ENCODE measurements at regions of chr12 and their contacts with region 1.

Region 1: DNA sequence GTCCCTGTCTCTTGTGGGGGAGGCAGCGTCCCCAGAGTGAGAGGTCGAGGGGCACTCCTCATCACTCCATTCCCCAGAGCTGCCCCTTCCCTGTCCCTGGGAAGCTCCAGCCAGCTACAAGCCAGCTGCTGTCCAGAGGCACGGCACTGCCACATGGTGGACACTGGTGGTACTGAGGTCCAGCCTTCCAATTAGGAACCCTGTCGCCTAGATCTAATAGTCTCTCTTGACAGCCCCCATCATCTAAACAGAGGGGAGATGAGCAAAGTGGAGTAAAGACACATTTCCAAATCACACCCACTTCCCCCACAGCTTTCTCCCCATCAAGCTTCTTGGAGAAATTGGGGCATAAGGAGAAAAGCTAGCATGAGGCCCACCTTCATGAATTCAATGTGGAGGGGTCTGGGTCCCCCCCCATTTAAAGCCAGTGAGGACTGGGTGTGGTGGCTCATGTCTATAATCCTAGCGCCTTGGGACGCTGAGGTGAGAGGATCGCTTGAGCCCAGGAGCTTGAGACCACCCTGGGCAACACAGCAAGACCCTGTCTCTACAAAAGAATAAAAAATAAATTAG is 2.1 kb upstream of the INHBE start:
- DNase-seq: peak; percentile 88
- ATAC-seq: peak; percentile 83

Region 2: DNA sequence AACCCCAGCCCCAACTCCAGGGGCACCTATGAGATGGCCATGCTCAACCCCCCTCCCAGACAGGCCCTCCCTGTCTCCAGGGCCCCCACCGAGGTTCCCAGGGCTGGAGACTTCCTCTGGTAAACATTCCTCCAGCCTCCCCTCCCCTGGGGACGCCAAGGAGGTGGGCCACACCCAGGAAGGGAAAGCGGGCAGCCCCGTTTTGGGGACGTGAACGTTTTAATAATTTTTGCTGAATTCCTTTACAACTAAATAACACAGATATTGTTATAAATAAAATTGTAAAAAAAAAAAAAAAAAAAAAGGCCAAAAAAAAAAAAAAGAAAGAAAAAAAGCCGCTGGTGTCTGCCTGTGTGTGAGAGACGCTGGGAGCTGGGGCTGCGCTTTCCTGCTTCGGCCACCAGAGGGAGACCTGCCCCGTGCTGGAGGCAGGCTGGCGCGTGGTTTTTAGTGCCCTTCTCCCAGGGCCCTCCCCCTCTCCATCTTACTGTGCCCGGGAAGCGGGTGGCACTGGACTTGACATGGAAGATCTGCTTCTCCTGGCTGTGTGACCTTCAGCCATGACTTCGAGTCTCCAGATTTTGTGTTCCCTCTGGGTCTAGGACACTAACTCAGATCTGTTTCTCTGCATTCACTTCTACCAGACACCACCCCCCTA is 239.8 kb before region 1 on chr12:
- intact Hi-C with region 1: loop called (anchors 5 kb)
- DNase-seq: peak; percentile 94
- ATAC-seq: peak; percentile 70

Region 3: DNA sequence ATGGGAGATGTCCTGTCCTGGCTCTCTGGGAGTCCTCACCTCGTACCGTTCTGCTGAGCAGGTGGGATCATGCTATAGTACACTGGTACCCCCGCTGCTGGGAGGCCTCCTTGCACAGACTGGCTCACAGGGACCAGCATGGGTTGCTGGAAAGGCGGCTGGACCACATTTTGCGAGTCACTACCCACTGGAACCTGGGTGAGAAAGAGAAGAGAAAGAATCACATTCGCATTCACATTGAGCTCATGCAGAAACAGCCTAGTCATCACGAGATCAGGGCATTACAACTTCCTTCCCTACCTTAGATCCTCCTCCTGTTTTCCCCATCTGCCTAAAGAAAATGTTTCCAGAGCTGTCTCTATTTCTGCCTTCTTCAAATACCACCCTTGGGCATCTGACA is 184.8 kb before region 1 on chr12:
- intact Hi-C with region 1: loop called (anchors 2 kb)
- DNase-seq: no peak
- ATAC-seq: no peak

Region 4: GRCh38 chr12:57309420-57309819 is 143.6 kb before region 1 on chr12:
- intact Hi-C with region 1: loop called (anchors 1 kb)
- DNase-seq: no peak
- ATAC-seq: no peak

Measured in Right ventricle myocardium inferior (tissue), 1 donor.